Endothelial cell of umbilical vein (primary cell): ENCODE measurements at regions of chr3 and their contacts with region 1.

Region 1: DNA sequence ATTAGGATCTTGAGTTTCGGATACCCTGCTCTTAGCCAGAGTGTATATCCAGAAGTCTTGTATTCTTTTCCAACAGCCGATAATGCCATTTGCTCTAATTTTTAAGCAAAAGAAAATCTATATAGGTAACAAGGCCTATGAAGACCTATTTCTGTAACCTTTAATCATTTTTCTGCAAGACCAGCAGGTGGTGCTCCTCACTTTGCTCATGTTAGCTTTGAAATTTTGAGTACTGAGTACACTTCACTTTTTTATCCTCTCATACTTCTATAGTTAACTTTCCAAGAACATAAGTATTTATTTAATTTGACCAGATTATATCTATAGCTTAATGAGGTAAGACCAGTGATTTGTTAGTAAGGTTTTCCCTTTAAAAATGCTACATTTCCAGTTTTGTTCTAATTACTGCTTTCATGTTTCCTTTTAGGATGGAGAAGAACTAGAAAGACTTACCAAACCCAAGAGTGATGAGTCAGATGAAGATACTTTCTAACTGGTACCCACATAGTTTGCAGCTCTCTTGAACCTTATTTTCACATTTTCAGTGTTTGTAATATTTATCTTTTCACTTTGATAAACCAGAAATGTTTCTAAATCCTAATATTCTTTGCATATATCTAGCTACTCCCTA is 20.5 kb downstream of the SLC35A5 start:
- DNase-seq: peak; percentile 77
- H3K4me3 ChIP-seq: no peak overlapping the region
- H3K27ac ChIP-seq: no peak overlapping the region
- H3K4me1 ChIP-seq: no peaks in the 10 kb centered on the region
- H3K27me3 ChIP-seq: no peaks in the 10 kb centered on the region
- CTCF ChIP-seq: peak; percentile 40 to 46
- POLR2A ChIP-seq: no peak

Region 2: GRCh38 chr3:112136959-112137693 is 445.2 kb before region 1 on chr3:
- CTCF ChIA-PET with region 1: no interaction called
- POLR2A ChIA-PET with region 1: no interaction called
- dilution Hi-C with region 1: no loop called
- intact Hi-C with region 1: no loop called
- DNase-seq: peak; percentile 57
- H3K4me3 ChIP-seq: no peak overlapping the region
- H3K27ac ChIP-seq: no peak overlapping the region
- H3K4me1 ChIP-seq: no peaks in the 10 kb centered on the region
- H3K27me3 ChIP-seq: peaks cover 3 to 5% of the 10 kb centered on the region in 2 experiments
- CTCF ChIP-seq: peak; percentile 45 to 54
- POLR2A ChIP-seq: no peak

Region 3: GRCh38 chr3:112594856-112595255 is 12.5 kb after region 1 on chr3:
- CTCF ChIA-PET with region 1: interaction called, 17 read pairs
- POLR2A ChIA-PET with region 1: no interaction called
- dilution Hi-C with region 1: no loop called
- intact Hi-C with region 1: no loop called
- DNase-seq: no peak
- H3K4me3 ChIP-seq: no peak overlapping the region
- H3K27ac ChIP-seq: no peak overlapping the region
- H3K4me1 ChIP-seq: peaks cover 14% of the 10 kb centered on the region
- H3K27me3 ChIP-seq: no peaks in the 10 kb centered on the region
- CTCF ChIP-seq: no peak
- POLR2A ChIP-seq: no peak

Region 4: GRCh38 chr3:112635671-112636070 is 53.3 kb after region 1 on chr3:
- CTCF ChIA-PET with region 1: interaction called, 100 read pairs
- POLR2A ChIA-PET with region 1: interaction called, 10 read pairs
- dilution Hi-C with region 1: no loop called
- intact Hi-C with region 1: loop called (anchors 1 kb)
- DNase-seq: peak; percentile 49
- H3K4me3 ChIP-seq: no peak overlapping the region
- H3K27ac ChIP-seq: no peak overlapping the region
- H3K4me1 ChIP-seq: peaks cover 31% of the 10 kb centered on the region
- H3K27me3 ChIP-seq: no peaks in the 10 kb centered on the region
- CTCF ChIP-seq: no peak
- POLR2A ChIP-seq: no peak

Region 5: DNA sequence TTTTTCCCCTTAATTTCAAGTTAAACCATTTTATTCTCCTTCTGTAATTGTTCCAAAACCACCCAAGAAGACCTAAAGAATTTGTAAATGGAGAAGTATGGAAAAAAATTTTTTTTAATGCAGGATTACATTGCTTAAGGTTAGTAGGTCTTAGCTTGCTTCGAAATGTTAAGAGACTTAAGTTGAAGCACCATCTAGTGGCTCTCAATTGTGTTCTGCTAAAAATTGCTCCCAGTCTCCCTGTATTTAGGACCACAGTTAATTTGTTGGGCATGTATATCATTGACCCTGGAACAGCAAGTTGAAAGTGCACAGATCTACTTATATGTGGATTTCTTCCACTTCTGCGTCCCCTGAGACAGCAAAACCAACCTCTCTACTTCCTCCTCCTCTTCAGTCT is 231.9 kb after region 1 on chr3:
- CTCF ChIA-PET with region 1: interaction called, 48 read pairs
- POLR2A ChIA-PET with region 1: no interaction called
- dilution Hi-C with region 1: no loop called
- intact Hi-C with region 1: loop called (anchors 2 kb)
- DNase-seq: peak; percentile 67
- H3K4me3 ChIP-seq: no peak overlapping the region
- H3K27ac ChIP-seq: no peak overlapping the region
- H3K4me1 ChIP-seq: no peaks in the 10 kb centered on the region
- H3K27me3 ChIP-seq: peaks cover 0 to 7% of the 10 kb centered on the region in 2 experiments
- CTCF ChIP-seq: peak in 1 of 2 donors; percentile 40
- POLR2A ChIP-seq: no peak

Region 6: GRCh38 chr3:113019182-113020137 is 437.1 kb after region 1 on chr3:
- CTCF ChIA-PET with region 1: no interaction called
- POLR2A ChIA-PET with region 1: no interaction called
- dilution Hi-C with region 1: no loop called
- intact Hi-C with region 1: no loop called
- DNase-seq: peak; percentile 91
- H3K4me3 ChIP-seq: peak overlapping the region; percentile 83 to 91 (median 83)
- H3K27ac ChIP-seq: peak overlapping the region; percentile 75
- H3K4me1 ChIP-seq: peaks cover 16% of the 10 kb centered on the region
- H3K27me3 ChIP-seq: no peaks in the 10 kb centered on the region
- CTCF ChIP-seq: no peak
- POLR2A ChIP-seq: peak; percentile 75

Region 7: DNA sequence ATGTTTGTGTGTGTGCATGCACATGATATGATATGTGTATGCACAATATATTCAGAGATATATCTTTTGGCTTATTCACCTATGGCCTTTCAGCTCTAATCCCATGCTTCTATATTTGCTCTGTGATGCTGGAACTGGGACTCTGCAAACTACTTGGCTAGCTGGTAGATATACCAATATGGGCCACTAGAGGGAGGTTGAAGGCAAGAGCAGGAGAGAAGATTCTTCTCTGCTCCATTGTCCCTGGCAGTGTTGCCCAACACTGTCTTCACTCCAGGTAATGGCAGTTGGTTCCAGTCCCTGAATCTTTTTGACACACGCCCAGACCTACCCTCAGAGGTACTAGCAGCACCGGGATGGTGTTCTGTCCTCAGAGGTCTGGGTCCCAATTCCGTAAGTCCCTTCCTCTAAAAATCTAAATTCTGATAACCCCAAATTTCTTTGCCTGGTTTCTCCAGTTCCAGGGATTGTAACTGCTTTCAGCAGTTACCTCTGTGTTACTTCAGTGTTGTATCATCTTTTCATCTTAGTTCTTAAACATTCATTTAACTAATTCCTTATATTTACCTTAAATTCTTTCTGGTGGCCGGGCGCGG is 453.1 kb after region 1 on chr3:
- CTCF ChIA-PET with region 1: interaction called, 16 read pairs
- POLR2A ChIA-PET with region 1: no interaction called
- dilution Hi-C with region 1: no loop called
- intact Hi-C with region 1: no loop called
- DNase-seq: peak; percentile 47
- H3K4me3 ChIP-seq: no peak overlapping the region
- H3K27ac ChIP-seq: no peak overlapping the region
- H3K4me1 ChIP-seq: no peaks in the 10 kb centered on the region
- H3K27me3 ChIP-seq: no peaks in the 10 kb centered on the region
- CTCF ChIP-seq: peak; percentile 73 to 83
- POLR2A ChIP-seq: no peak